Mucosa of descending colon (tissue), 3 donors: ENCODE measurements at regions of chr20 and their contacts with region 1.

Region 1: GRCh38 chr20:38926142-38926933 is at the start of gene FAM83D:
- DNase-seq: peak; percentile 96 to 98 (median 98)
- ATAC-seq: peak; percentile 97
- H3K4me3 ChIP-seq: peak within 1 kb of the TSS; percentile 47
- H3K4me1 ChIP-seq: peaks cover 12% of the 10 kb centered on the region
- CTCF ChIP-seq: no peak
- total RNA-seq, gene FAM83D: 3.4 to 13.9 (median 13.1) TPM

Region 2: GRCh38 chr20:39049684-39050554 is 123.6 kb after region 1 on chr20:
- intact Hi-C with region 1: loop called (anchors 5 to 10 kb)
- DNase-seq: peak; percentile 84 to 88 (median 85)
- ATAC-seq: peak; percentile 93
- H3K4me3 ChIP-seq: no peak overlapping the region
- H3K4me1 ChIP-seq: no peaks in the 10 kb centered on the region
- CTCF ChIP-seq: peak; percentile 97

Region 3: DNA sequence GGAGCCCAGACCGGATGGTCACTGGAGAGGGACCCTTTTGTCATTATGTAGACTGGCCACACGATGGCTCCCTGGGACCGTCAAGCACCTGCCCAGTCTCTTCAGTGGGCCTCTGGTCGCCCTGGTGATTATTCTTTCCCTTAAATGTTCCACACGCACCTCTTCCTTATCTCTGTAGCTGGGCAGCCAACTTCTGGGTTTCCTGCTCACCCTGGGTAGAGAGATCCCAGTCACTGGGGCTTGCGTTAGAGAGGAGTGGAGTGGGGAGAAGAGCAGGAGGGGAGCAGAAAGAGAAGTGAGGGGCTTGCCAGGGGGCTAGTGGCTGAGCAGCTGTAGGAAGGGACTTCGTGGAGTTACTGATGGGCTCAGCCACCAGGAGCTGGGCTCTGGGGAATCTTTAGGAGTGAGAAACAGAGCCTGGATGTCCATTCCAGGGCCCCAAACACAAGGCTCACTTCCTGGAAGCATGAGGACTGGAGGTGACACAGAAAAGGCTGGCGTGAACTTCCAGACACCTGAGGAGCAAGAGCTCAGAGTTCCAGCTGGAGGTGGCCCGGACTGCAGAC is 185.9 kb after region 1 on chr20:
- intact Hi-C with region 1: no loop called
- DNase-seq: peak in 1 of 3 donors; percentile 7
- ATAC-seq: peak; percentile 71
- H3K4me3 ChIP-seq: no peak overlapping the region
- H3K4me1 ChIP-seq: no peaks in the 10 kb centered on the region
- CTCF ChIP-seq: no peak